Activated T-helper 2 cell treated with anti-CD3 and anti-CD28 coated beads, Interferon-gamma antibody, Interleukin-2, Interleukin-4, amounts not matched to agents 10 μg/mL and 5 μg/mL and 100 μg/mL, durations not matched to agents 14 hours and 24 hours and 36 hours (primary cell): ENCODE measurements at regions of chr9 and their contacts with region 1.

Region 1: GRCh38 chr9:35618854-35619799 is 914 bp upstream of the CD72 start:
- DNase-seq: peak; percentile 28
- H3K4me3 Mint-ChIP-seq: peak overlapping the region; percentile 47
- H3K27ac Mint-ChIP-seq: peak overlapping the region; percentile 95
- H3K4me1 Mint-ChIP-seq: peaks cover 63% of the 10 kb centered on the region
- H3K27me3 Mint-ChIP-seq: no peaks in the 10 kb centered on the region

Region 2: DNA sequence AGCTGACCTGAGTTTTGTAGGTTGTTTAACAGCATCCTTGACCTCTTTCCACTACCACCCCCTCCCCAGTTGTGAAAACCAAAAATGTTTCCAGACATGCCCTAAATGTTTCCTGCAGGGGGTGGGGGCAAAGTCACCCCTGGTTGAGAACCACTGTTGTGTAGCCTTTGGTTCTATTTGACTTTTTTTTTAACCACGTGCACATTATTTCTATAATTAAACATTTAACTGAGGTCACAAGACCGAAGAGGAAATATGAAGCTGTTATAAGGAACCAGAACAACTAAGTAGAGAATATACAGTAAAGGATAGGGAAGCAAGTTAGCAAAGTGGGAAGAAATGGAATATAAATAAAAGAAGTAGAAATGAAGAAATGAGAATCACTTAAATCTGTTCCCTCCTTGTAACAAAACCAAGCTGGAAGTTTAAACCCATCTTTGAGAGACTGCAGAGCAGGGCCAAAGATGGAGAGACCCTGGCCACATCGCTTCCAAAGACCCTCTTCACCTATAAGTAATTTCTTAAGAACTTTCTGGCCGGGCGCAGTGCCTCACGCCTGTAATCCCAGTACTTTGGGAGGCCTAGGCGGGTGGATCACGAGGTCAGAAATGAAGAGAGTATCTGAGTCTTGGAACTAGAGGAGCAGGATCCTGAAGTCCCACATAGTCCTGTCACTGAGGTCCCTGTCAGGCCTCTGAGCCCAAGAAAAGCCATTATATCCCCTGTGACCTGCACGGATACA is 17.2 kb after region 1 on chr9:
- intact Hi-C with region 1: loop called (anchors 2 kb)
- DNase-seq: no peak
- H3K4me3 Mint-ChIP-seq: no peak overlapping the region
- H3K27ac Mint-ChIP-seq: peak overlapping the region; percentile 76
- H3K4me1 Mint-ChIP-seq: peaks cover 48% of the 10 kb centered on the region
- H3K27me3 Mint-ChIP-seq: no peaks in the 10 kb centered on the region